Panc1 (cell line): ENCODE measurements at regions of chr16 and their contacts with region 1.

Region 1: DNA sequence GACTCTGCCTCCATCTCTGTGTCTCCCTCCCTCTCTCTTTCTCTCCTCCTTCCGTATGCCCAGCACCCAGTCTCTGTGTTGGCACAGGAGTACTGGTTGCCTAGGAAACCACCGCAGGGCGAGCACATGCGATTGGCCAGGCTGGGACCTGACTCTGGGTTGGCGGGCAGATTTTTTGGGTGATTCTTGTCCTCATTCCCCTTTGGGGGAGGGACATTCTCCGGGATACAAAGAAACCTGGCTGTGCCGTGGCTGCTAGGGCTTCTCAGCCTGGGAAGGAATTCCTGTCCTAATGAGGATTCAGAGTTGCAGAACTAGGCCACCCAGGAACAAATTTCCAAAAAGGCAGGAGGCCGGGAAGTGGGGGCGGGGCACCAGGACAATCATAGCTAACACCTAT is 168.9 kb downstream of the SHISA9 start:
- DNase-seq: no peak
- ATAC-seq: no peak
- H3K4me3 ChIP-seq: no peak overlapping the region
- H3K27ac ChIP-seq: no peak overlapping the region
- H3K4me1 ChIP-seq: no peaks in the 10 kb centered on the region
- H3K27me3 ChIP-seq: no peaks in the 10 kb centered on the region
- CTCF ChIP-seq: no peak

Region 2: DNA sequence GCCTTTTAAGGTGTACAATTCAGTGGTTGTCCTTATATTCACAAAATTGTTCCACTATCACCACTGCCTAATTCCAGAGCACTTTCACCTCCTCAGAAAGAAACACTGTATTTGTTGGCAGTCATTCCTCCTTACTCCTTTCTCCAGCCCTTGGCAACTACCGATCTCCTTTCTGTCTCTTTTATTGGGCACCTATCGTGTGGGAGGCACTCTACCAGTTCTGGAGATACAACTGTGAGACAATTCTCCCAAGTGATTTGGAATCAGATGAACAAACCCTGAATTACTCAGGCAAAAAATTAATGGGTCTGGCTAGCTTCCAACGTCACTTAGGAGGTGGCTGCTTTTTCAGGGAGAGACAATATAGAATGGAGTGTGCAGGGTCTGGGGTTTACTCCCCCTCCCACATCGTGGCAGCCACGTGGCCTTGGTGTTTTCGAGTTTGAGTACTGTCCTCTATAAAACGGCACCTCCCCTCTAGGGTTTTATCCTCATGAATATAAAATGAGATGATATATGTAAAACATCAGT is 104.9 kb before region 1 on chr16:
- CTCF ChIA-PET with region 1: no interaction called
- POLR2A ChIA-PET with region 1: interaction called, 12 read pairs
- in situ Hi-C with region 1: no loop called
- intact Hi-C with region 1: no loop called
- DNase-seq: no peak
- ATAC-seq: no peak
- H3K4me3 ChIP-seq: no peak overlapping the region
- H3K27ac ChIP-seq: no peak overlapping the region
- H3K4me1 ChIP-seq: no peaks in the 10 kb centered on the region
- H3K27me3 ChIP-seq: no peaks in the 10 kb centered on the region
- CTCF ChIP-seq: no peak